ENCODE measurements at regions of chr1 and their contacts with region 1.

Region 1: GRCh38 chr1:101532377-101532776 is 295.6 kb downstream of the S1PR1 start:
- DNase-seq: no peak
- ATAC-seq: no peak
- H3K4me3 ChIP-seq: no peak overlapping the region
- H3K27ac ChIP-seq: no peak overlapping the region
- H3K4me1 ChIP-seq: no peaks in the 10 kb centered on the region
- H3K27me3 ChIP-seq: no peaks in the 10 kb centered on the region
- CTCF ChIP-seq: no peak
- EP300 ChIP-seq: no peak
- POLR2A ChIP-seq: no peak
- RAD21 ChIP-seq: no peak

Region 2: GRCh38 chr1:100543640-100544039 is 988.7 kb before region 1 on chr1:
- CTCF ChIA-PET with region 1: no interaction called
- POLR2A ChIA-PET with region 1: no interaction called
- in situ Hi-C with region 1: no loop called
- intact Hi-C with region 1: no loop called
- DNase-seq: peak; percentile 40
- ATAC-seq: peak; percentile 90
- H3K4me3 ChIP-seq: no peak overlapping the region
- H3K27ac ChIP-seq: no peak overlapping the region
- H3K4me1 ChIP-seq: peaks cover 17% of the 10 kb centered on the region
- H3K27me3 ChIP-seq: peaks cover 0 to 5% of the 10 kb centered on the region in 2 experiments; a peak in 3 of 5 replicates
- CTCF ChIP-seq: peak; percentile 51
- EP300 ChIP-seq: no peak
- POLR2A ChIP-seq: no peak
- RAD21 ChIP-seq: 0 out of 2 replicates have a peak, but pooled peaks have one; percentile 33

Region 3: GRCh38 chr1:101203820-101204540 is 328.4 kb before region 1 on chr1:
- CTCF ChIA-PET with region 1: no interaction called
- POLR2A ChIA-PET with region 1: no interaction called
- in situ Hi-C with region 1: no loop called
- intact Hi-C with region 1: no loop called
- DNase-seq: no peak
- ATAC-seq: no peak
- H3K4me3 ChIP-seq: no peak overlapping the region
- H3K27ac ChIP-seq: no peak overlapping the region
- H3K4me1 ChIP-seq: no peaks in the 10 kb centered on the region
- H3K27me3 ChIP-seq: peaks cover 0 to 2% of the 10 kb centered on the region in 2 experiments; a peak in 1 of 5 replicates
- CTCF ChIP-seq: no peak
- EP300 ChIP-seq: no peak
- POLR2A ChIP-seq: no peak
- RAD21 ChIP-seq: no peak

Region 4: GRCh38 chr1:101592845-101593244 is 60.5 kb after region 1 on chr1:
- CTCF ChIA-PET with region 1: no interaction called
- POLR2A ChIA-PET with region 1: no interaction called
- in situ Hi-C with region 1: no loop called
- intact Hi-C with region 1: loop called (anchors 10 kb)
- DNase-seq: no peak
- ATAC-seq: no peak
- H3K4me3 ChIP-seq: no peak overlapping the region
- H3K27ac ChIP-seq: no peak overlapping the region
- H3K4me1 ChIP-seq: no peaks in the 10 kb centered on the region
- H3K27me3 ChIP-seq: no peaks in the 10 kb centered on the region
- CTCF ChIP-seq: no peak
- EP300 ChIP-seq: no peak
- POLR2A ChIP-seq: no peak
- RAD21 ChIP-seq: no peak